Activated CD8-positive, alpha-beta memory T cell treated with anti-CD3 and anti-CD28 coated beads, Interleukin-2, amount 10 ng/mL, durations not matched to agents 7 days and 5 days (primary cell): ENCODE measurements at regions of chr1 and their contacts with region 1.

Region 1: GRCh38 chr1:23496490-23497181 is 12.7 kb upstream of the ASAP3 start:
- DNase-seq: no peak
- ATAC-seq: peak; percentile 39
- H3K4me3 Mint-ChIP-seq: no peak overlapping the region
- H3K27ac Mint-ChIP-seq: no peak overlapping the region
- H3K4me1 Mint-ChIP-seq: peaks cover 5% of the 10 kb centered on the region
- H3K27me3 Mint-ChIP-seq: peaks cover 2% of the 10 kb centered on the region

Region 2: DNA sequence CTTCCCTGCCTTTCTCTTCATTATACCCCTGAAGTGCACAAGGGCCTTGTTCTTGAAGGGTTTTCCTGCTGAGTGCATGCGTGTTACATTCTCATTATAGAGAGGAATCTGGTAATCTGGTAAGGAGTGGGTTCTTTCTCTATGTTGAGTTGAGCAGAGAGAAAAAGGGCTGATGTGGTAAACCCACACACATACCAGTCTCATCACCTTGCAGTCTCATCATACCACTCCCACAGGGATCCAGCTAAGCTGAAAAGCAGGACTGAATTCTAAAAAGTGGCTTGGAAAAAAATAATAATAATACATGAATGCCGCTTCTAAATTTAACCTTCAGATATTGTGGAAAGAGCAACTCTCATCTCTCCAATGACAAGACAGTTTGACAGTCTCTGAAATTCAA is 268.8 kb before region 1 on chr1:
- CTCF ChIA-PET with region 1: no interaction called
- DNase-seq: no peak
- ATAC-seq: no peak
- H3K4me3 Mint-ChIP-seq: no peak overlapping the region
- H3K27ac Mint-ChIP-seq: no peak overlapping the region
- H3K4me1 Mint-ChIP-seq: no peaks in the 10 kb centered on the region
- H3K27me3 Mint-ChIP-seq: peaks cover 31% of the 10 kb centered on the region

Region 3: DNA sequence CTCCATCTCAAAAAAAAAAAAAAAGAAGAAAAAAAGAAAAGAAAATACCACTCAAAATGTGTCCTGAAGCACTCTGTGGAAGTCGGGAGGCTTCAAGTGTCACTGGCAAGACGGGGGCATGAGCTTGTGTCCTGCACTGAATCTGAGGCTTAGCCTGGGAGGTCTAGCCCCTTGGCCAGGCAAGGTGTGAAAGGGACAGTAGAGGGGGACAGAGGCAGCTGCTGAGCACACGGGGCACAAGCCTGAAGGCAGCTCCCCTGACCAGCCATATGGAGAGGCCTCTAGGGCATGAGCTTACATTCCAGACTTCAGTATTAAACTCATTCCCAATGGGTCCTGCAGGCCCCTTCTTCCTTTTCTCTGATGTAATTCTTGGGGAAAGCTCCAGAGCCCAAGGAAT is 10.9 kb after region 1 on chr1:
- CTCF ChIA-PET with region 1: interaction called, 49 read pairs
- DNase-seq: no peak
- ATAC-seq: no peak
- H3K4me3 Mint-ChIP-seq: no peak overlapping the region
- H3K27ac Mint-ChIP-seq: no peak overlapping the region
- H3K4me1 Mint-ChIP-seq: no peaks in the 10 kb centered on the region
- H3K27me3 Mint-ChIP-seq: no peaks in the 10 kb centered on the region

Region 4: GRCh38 chr1:23530747-23531561 is 34.3 kb after region 1 on chr1 and contains the start of gene E2F2:
- CTCF ChIA-PET with region 1: interaction called, 308 read pairs
- DNase-seq: peak; percentile 92
- ATAC-seq: peak; percentile 73
- H3K4me3 Mint-ChIP-seq: peak within 1 kb of the TSS; percentile 91
- H3K27ac Mint-ChIP-seq: peak within 1 kb of the TSS; percentile 94
- H3K4me1 Mint-ChIP-seq: peaks cover 69% of the 10 kb centered on the region
- H3K27me3 Mint-ChIP-seq: peaks cover 3% of the 10 kb centered on the region
- total RNA-seq, gene E2F2: 77.4 to 103 TPM

Region 5: DNA sequence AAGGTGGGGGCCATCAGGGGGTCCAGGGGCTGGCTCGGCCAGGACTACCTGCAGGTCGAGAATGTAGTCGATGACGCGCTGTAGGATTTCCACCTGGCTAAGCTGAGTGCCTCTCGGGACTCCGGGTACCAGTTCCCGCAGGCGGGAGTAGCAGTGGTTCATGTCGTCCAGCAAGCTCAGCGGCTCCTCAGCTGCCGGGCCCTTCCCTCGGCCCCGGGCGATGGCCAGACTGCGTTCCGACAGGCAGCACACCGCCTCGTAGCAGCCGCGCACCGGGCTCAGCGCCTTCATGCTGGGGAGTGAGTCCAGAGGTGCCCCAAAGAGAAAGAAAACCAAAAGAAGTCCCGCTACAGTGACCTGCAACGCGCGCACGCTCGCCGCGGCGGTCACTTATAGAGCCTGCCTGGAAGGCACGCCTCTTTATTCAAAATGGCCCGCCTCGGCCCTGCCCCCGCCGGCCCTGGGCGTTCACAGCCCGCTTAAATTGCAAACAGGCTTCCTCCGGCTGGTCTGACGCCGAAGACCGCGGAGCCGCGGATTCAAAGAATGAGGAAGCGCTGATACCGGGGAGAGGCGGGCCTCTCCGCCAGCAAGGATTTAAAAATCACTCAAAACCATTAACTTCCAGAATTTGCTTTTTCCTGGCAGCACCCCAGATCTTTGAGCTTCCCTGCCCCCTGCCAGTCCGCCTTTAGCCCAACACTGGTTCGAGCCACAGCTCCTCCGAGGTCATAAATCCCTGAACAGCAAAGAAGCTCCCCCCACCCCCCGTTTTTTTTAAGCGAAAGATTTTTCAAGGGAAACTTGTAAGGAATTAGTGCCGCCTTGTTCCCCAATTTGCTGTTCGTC is 62.7 kb after region 1 on chr1 and contains the start of gene ID3:
- CTCF ChIA-PET with region 1: interaction called, 11 read pairs
- DNase-seq: peak; percentile 95
- ATAC-seq: peak; percentile 80
- H3K4me3 Mint-ChIP-seq: peak within 1 kb of the TSS; percentile 84
- H3K27ac Mint-ChIP-seq: peak within 1 kb of the TSS; percentile 71
- H3K4me1 Mint-ChIP-seq: peaks cover 50% of the 10 kb centered on the region
- H3K27me3 Mint-ChIP-seq: peaks cover 42% of the 10 kb centered on the region
- total RNA-seq, gene ID3: 14.4 to 34.2 TPM

Region 6: GRCh38 chr1:23664837-23665795 is 168.5 kb after region 1 on chr1:
- CTCF ChIA-PET with region 1: interaction called, 14 read pairs
- DNase-seq: peak; percentile 48
- ATAC-seq: peak; percentile 71
- H3K4me3 Mint-ChIP-seq: no peak overlapping the region
- H3K27ac Mint-ChIP-seq: peak overlapping the region; percentile 34
- H3K4me1 Mint-ChIP-seq: peaks cover 10% of the 10 kb centered on the region
- H3K27me3 Mint-ChIP-seq: peaks cover 3% of the 10 kb centered on the region

Region 7: GRCh38 chr1:23759277-23759676 is 262.6 kb after region 1 on chr1:
- CTCF ChIA-PET with region 1: no interaction called
- DNase-seq: no peak
- ATAC-seq: no peak
- H3K4me3 Mint-ChIP-seq: no peak overlapping the region
- H3K27ac Mint-ChIP-seq: no peak overlapping the region
- H3K4me1 Mint-ChIP-seq: no peaks in the 10 kb centered on the region
- H3K27me3 Mint-ChIP-seq: no peaks in the 10 kb centered on the region